ENCODE measurements at regions of chr15 and their contacts with region 1.

Region 1: DNA sequence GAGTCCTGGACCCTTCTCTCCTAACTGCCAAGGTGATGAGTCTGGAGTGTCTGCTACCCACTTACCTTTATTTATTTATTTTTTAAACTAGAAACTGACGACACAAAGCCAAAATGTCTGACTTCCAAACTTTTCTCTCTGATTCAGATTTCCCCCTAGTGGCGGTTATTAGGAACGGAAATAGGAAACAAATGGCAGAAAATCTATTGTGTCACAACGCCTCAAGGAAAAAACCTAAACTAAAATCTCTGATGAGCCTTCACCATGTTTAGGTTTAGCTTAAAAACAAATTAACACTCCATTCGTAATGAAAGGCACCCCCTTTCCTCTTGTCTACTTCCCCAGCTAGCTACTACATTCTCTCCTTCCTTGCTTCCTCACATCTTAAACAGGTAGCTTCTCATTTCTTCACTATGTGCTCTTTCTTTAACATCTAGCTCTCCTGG is 94.0 kb upstream of the MEX3B start:
- DNase-seq: peak; percentile 56 to 63
- ATAC-seq: peak; percentile 79 to 84
- H3K4me3 ChIP-seq: no peak overlapping the region
- H3K27ac ChIP-seq: peak overlapping the region in 1 of 2 experiments; percentile 43; a peak in 1 of 6 replicates
- H3K4me1 ChIP-seq: 0 out of 3 replicates have a peak, but pooled peaks cover 3% of the 10 kb centered on the region
- CTCF ChIP-seq: peak; percentile 88
- EP300 ChIP-seq: no peak
- POLR2A ChIP-seq: no peak
- RAD21 ChIP-seq: peak; percentile 81 to 82

Region 2: GRCh38 chr15:82021992-82022391 is 117.9 kb before region 1 on chr15:
- CTCF ChIA-PET with region 1: no interaction called
- POLR2A ChIA-PET with region 1: no interaction called
- DNase-seq: no peak
- ATAC-seq: no peak
- H3K4me3 ChIP-seq: no peak overlapping the region
- H3K27ac ChIP-seq: no peak overlapping the region
- H3K4me1 ChIP-seq: no peaks in the 10 kb centered on the region
- CTCF ChIP-seq: no peak
- EP300 ChIP-seq: no peak
- POLR2A ChIP-seq: no peak
- RAD21 ChIP-seq: no peak

Region 3: DNA sequence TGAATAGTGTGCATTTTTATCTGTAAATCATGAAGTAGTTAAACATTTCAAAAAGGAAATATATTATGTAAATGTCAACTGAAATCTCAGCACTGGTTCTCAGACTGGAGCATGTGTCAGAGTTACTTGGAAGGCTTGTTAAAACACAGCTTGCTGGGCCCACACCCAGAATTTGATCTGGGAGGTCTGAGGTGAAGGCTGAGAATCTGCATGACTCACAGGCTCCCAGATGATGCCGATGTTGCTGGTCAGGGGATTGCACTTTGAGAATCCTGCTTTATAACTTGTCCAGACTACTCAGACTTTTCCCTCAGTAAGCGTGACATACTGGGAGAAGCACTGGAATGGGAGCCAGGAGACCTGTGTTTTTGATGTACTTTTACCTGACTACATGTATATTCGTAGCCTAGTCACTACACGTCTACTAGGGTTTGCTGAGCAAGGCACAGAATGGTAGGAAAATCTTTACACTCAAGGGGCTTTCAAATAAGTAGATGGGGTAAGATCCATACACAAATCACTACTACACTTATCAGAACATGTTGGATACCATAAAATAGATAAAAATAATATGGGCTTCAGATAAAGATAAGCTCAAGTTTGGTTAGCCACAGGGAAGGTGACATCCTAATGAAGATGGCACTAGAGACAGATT is 17.0 kb before region 1 on chr15:
- CTCF ChIA-PET with region 1: interaction called, 18 read pairs
- POLR2A ChIA-PET with region 1: no interaction called
- DNase-seq: peak; percentile 63 to 80
- ATAC-seq: peak; percentile 92 to 94
- H3K4me3 ChIP-seq: no peak overlapping the region
- H3K27ac ChIP-seq: peak overlapping the region; percentile 45 to 73; a peak in 5 of 6 replicates
- H3K4me1 ChIP-seq: peaks cover 25% of the 10 kb centered on the region
- CTCF ChIP-seq: no peak
- EP300 ChIP-seq: peak; percentile 46 to 56; a peak in 2 of 5 replicates
- POLR2A ChIP-seq: no peak
- RAD21 ChIP-seq: no peak

Region 4: GRCh38 chr15:82129761-82130160 is 10.1 kb before region 1 on chr15:
- CTCF ChIA-PET with region 1: interaction called, 16 read pairs
- POLR2A ChIA-PET with region 1: no interaction called
- DNase-seq: peak in 1 of 2 experiments; percentile 43
- ATAC-seq: peak; percentile 62 to 69
- H3K4me3 ChIP-seq: no peak overlapping the region
- H3K27ac ChIP-seq: peak overlapping the region in 1 of 2 experiments; percentile 59; a peak in 3 of 6 replicates
- H3K4me1 ChIP-seq: peaks cover 45% of the 10 kb centered on the region
- CTCF ChIP-seq: no peak
- EP300 ChIP-seq: 0 out of 5 replicates have a peak, but pooled peaks of 1 of the 2 experiments have one; percentile 12
- POLR2A ChIP-seq: no peak
- RAD21 ChIP-seq: no peak

Region 5: DNA sequence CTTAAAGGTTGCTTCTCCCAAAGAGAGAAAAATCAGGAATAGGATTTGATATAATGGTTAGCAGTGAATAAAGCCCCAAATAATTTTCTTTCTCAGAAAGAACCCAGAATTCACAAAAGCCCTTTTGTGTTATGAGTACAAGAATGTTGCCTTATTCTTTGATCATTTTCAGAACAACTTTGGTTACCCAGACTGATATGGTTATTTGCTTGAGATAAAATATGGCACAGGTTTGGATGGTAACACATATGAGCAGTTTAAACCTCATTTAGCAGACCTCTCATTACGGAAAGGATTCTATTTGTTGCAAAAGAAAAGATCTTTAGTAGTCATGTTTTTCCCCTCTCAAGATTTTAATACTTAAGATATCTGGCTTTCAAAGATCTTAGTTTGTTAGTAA is 10.8 kb after region 1 on chr15:
- CTCF ChIA-PET with region 1: interaction called, 16 read pairs
- POLR2A ChIA-PET with region 1: no interaction called
- DNase-seq: no peak
- ATAC-seq: no peak
- H3K4me3 ChIP-seq: no peak overlapping the region
- H3K27ac ChIP-seq: no peak overlapping the region
- H3K4me1 ChIP-seq: peaks cover 16% of the 10 kb centered on the region
- CTCF ChIP-seq: no peak
- EP300 ChIP-seq: no peak
- POLR2A ChIP-seq: no peak
- RAD21 ChIP-seq: no peak

Region 6: DNA sequence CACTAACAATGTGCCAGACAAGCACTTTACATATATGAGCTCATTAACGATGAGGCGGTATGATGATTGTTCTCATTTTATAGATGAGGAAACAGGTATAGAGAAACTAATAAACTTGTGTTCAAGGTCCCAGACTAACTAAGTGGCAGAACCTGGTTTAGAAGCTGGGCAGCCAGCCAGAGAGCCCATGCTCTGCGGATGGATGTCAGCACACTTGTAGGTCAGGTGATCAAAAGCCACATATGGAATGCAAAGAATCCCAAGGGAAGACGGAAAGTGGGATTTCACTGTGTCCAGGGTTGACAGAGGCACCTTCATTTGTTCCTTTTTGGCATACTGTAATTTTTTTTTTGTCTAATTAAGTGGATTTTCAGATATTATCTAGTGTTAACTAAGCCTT is 19.0 kb after region 1 on chr15:
- CTCF ChIA-PET with region 1: interaction called, 14 read pairs
- POLR2A ChIA-PET with region 1: no interaction called
- DNase-seq: no peak
- ATAC-seq: no peak
- H3K4me3 ChIP-seq: no peak overlapping the region
- H3K27ac ChIP-seq: no peak overlapping the region
- H3K4me1 ChIP-seq: no peaks in the 10 kb centered on the region
- CTCF ChIP-seq: no peak
- EP300 ChIP-seq: no peak
- POLR2A ChIP-seq: no peak
- RAD21 ChIP-seq: no peak

Region 7: DNA sequence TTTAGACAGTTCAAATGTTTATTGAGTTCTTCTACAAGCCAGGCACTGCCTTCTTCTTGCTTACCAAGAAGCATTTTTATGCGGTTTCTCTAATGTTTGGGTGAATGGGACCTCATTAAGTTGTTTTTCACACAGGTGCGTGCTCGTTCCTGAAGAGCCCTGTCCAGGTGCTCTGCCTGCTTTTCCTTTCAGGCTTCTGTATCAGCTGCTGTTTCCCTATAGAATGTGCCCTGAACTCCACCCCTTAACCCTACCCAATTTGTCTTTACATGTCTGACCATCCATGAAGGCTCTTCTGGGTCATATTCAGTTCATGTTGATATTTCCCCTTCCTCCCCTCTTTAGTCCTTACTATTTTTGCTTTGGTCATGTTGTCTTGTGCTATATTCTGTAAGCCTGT is 231.8 kb after region 1 on chr15:
- CTCF ChIA-PET with region 1: no interaction called
- POLR2A ChIA-PET with region 1: no interaction called
- DNase-seq: no peak
- ATAC-seq: no peak
- H3K4me3 ChIP-seq: no peak overlapping the region
- H3K27ac ChIP-seq: no peak overlapping the region
- H3K4me1 ChIP-seq: no peaks in the 10 kb centered on the region
- CTCF ChIP-seq: no peak
- EP300 ChIP-seq: no peak
- POLR2A ChIP-seq: no peak
- RAD21 ChIP-seq: no peak

Region 8: DNA sequence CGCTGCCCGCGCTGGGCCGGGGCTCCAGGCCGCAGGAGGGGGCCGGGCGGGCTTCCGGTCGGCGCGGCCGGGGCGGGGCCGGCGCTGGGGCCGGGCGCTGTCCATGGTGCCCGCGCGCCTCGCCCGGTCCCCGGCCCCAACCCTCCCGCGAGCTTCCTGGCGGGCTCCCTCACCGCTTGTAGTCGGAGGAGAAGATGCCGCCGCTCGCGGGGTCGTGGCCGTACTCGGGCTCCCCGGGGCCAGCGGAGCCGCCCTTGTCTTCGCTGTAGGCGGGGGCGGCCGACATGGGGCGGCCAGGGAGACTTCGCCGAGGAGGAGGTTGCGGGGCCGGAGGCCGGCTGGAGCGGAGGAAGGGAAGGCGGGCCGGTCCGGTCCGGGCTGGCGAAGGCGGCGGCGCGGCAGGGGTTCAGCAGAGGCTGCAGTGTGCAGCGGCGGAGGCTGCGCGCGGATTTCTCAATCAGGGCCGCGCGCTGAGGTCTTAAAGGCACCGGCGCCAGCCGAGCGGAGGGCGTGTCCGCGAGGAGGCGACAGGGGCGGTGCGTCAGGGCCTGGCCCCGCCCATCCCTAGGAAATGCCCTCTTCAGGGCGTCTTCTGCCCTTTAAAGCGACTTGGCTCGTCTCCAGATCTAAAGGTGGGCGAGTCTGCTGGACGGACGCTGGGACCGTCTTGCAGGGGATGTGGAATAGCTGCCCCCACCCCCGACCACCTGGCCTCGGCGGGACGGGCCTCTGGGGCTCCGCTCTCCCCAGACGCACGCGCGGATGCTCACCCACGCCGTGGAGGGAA is 569.8 kb after region 1 on chr15 and contains the start of gene AP3B2:
- CTCF ChIA-PET with region 1: no interaction called
- POLR2A ChIA-PET with region 1: no interaction called
- DNase-seq: peak; percentile 77 to 86
- ATAC-seq: peak; percentile 92 to 95
- H3K4me3 ChIP-seq: peak within 1 kb of the TSS; percentile 82
- H3K27ac ChIP-seq: peak within 1 kb of the TSS; percentile 38 to 65; a peak in 4 of 6 replicates
- H3K4me1 ChIP-seq: 0 out of 3 replicates have a peak, but pooled peaks cover 4% of the 10 kb centered on the region
- CTCF ChIP-seq: no peak
- EP300 ChIP-seq: no peak
- POLR2A ChIP-seq: peak; percentile 23; the same call in 1 of the 2 replicates
- RAD21 ChIP-seq: no peak
- polyA plus RNA-seq, gene AP3B2: 0.56 and 0.68 TPM in 2 replicates

Region 9: GRCh38 chr15:84006421-84006820 is 1866.6 kb after region 1 on chr15:
- CTCF ChIA-PET with region 1: no interaction called
- POLR2A ChIA-PET with region 1: no interaction called
- DNase-seq: no peak
- ATAC-seq: no peak
- H3K4me3 ChIP-seq: no peak overlapping the region
- H3K27ac ChIP-seq: no peak overlapping the region
- H3K4me1 ChIP-seq: no peaks in the 10 kb centered on the region
- CTCF ChIP-seq: no peak
- EP300 ChIP-seq: no peak
- POLR2A ChIP-seq: no peak
- RAD21 ChIP-seq: no peak